Caco-2 (cell line): ENCODE measurements at regions of chr10 and their contacts with region 1.

Region 1: DNA sequence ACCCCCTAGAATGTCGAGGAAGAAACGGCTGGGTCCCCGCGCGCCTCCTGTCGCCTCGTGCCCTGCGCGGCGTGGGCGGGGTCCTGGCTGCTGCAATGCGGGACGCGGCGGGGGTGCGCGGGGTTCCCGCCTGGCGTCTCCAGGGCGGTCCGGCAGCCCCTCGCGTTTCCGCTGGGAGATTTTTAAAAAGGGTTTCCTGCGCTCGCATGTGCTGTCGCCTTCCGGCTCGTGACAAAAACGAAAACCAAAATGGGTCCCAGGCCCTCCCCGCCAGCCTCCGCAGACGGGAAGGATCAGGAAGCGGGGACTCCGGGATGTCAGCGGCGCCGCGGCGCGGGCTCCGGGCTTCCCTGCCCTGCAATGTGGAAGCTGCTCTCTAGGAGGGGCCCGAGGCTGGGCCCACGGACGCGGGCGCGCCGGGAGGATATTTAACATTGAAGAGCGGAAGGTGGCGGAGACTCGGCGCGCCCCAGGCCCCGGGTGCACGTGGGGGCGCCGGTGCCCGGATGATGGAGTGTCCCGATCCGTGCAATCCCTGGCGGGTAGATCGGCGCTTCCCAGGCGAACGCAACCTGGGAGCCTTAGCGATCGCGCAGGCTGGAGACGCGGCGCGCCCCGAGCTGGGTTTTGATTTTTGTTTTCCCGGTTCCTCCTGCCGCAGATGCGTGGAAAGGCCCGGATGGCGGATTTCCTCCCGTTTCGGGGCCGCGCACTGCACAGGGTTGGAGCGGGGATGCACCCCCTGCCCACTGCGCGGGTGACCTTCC is 1.0 kb downstream of the PFKP start:
- DNase-seq: peak; percentile 67 to 76
- H3K4me3 ChIP-seq: peak overlapping the region; percentile 97
- H3K4me3 Mint-ChIP-seq: peak overlapping the region; percentile 95
- H3K27ac Mint-ChIP-seq: peak overlapping the region; percentile 64
- H3K4me1 ChIP-seq: peaks cover 31% of the 10 kb centered on the region
- H3K4me1 Mint-ChIP-seq: peaks cover 34% of the 10 kb centered on the region
- H3K27me3 ChIP-seq: no peaks in the 10 kb centered on the region
- H3K27me3 Mint-ChIP-seq: no peaks in the 10 kb centered on the region
- CTCF ChIP-seq: peak; percentile 20 to 41

Region 2: DNA sequence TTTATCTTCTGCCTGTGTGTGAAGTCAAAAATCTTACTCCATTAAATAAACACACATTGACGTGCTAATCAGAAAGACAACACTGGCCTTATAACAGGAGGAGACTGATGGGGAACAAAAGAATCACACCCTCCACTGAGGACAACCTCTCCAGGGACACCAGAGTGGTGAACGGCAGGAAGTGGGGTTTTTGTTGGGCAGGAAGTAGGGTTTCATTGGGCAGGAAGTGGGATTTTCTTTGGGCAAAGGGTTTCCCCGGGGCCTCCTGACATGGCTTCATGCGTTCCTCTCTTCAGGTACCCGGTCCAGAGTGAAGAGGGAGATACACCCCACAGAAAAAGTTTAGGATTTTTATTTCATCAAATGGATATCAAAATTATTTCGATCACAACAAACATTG is 1361.7 kb before region 1 on chr10:
- CTCF ChIA-PET with region 1: interaction called, 11 read pairs
- POLR2A ChIA-PET with region 1: no interaction called
- intact Hi-C with region 1: no loop called
- DNase-seq: no peak
- H3K4me3 ChIP-seq: no peak overlapping the region
- H3K4me3 Mint-ChIP-seq: no peak overlapping the region
- H3K27ac Mint-ChIP-seq: no peak overlapping the region
- H3K4me1 ChIP-seq: no peaks in the 10 kb centered on the region
- H3K4me1 Mint-ChIP-seq: no peaks in the 10 kb centered on the region
- H3K27me3 ChIP-seq: no peaks in the 10 kb centered on the region
- H3K27me3 Mint-ChIP-seq: peaks cover 8% of the 10 kb centered on the region
- CTCF ChIP-seq: no peak

Region 3: DNA sequence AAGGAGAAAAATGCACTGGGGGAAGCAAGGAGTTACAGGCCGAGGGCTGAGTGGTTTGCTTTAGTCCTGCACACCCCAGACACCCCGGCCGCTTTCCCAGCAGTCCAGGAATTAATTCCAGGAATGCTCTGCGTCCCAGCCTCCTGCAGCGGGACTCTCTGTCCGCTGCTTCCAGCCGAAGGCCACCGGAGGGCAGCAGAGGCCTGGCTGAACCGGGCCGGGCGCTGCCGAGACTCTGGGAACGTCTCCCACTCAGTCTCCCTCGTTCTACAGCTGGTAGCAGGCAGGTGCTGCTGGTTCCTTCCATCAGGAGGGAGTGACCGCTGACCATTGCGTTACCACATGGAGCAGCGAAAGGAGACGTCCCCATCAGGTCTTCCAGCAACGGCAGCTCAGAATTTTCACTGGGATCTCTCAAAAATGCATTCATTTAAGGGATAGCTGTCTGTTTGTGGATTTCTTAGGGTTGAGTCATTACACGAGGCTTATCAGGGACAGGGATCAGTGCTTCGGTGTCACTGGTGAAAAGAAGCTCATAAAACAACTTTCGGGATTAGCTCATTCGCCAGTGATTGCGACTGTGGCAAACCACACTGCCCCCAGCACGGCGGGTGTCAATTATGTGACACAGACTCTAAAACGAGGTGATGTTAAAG is 129.1 kb after region 1 on chr10:
- CTCF ChIA-PET with region 1: interaction called, 10 read pairs
- POLR2A ChIA-PET with region 1: no interaction called
- intact Hi-C with region 1: no loop called
- DNase-seq: peak; percentile 89 to 92
- H3K4me3 ChIP-seq: peak overlapping the region; percentile 9
- H3K4me3 Mint-ChIP-seq: peak overlapping the region; percentile 75
- H3K27ac Mint-ChIP-seq: peak overlapping the region; percentile 66
- H3K4me1 ChIP-seq: no peaks in the 10 kb centered on the region
- H3K4me1 Mint-ChIP-seq: peaks cover 9% of the 10 kb centered on the region
- H3K27me3 ChIP-seq: no peaks in the 10 kb centered on the region; the same call in 1 of the 2 replicates
- H3K27me3 Mint-ChIP-seq: peaks cover 6% of the 10 kb centered on the region
- CTCF ChIP-seq: peak; percentile 92 to 99